Sciatic nerve (tissue), 2 donors: ENCODE measurements at regions of chr6 and their contacts with region 1.

Region 1: DNA sequence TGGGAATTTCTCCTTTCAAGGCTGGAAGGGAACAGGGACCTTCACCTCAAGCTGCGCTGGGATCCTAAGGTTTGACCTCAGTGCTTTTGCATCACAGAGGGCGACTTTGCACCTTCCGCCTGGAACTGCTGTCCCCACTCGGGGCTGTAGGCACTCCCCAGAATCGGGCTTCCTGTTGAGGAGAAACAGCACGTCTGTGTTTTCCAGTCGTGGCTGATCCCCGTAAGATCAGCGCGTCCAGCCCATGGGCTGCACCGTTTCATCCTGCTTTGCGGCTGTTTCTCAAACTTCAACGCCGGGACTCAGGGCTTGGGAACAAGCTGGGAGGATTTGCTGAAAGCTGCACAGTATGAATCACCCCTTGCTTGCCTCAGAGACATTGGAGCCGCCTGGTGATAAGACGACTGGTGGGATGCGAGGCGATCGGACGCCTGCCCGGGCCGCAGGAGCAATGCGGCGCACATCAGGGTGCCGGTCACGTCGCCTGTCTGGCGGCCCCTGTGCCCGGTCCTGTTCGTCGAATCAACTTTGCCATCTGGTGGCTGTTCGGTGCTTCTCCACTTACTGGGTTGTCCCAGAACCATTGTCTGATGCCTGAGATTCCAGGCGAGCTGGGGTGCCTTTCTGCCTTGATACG is 53.6 kb upstream of the FRMD1 start:
- DNase-seq: no peak
- ATAC-seq: peak; percentile 80

Region 2: DNA sequence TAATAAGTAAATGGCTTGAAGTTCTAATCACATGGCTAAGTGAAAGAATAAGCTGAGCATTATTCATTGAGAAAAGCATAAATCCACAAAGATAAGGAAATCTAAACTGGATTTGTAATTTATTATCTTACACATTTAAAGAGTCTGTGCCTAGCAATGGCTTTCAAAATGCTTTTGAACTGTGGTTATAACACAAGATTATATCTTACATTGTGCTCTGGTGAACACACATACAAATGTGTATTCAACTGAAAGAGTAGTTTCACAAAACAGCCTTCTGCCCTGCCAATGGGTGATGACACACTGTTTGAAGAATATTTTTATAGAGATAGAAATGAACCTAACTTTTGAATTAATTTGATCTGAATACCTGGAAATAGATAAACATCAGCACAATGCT is 222.6 kb before region 1 on chr6:
- intact Hi-C with region 1: loop called (anchors 5 kb)
- DNase-seq: no peak
- ATAC-seq: no peak

Region 3: GRCh38 chr6:168355716-168356449 is 223.2 kb after region 1 on chr6:
- intact Hi-C with region 1: no loop called
- DNase-seq: no peak
- ATAC-seq: peak; percentile 91

Region 4: DNA sequence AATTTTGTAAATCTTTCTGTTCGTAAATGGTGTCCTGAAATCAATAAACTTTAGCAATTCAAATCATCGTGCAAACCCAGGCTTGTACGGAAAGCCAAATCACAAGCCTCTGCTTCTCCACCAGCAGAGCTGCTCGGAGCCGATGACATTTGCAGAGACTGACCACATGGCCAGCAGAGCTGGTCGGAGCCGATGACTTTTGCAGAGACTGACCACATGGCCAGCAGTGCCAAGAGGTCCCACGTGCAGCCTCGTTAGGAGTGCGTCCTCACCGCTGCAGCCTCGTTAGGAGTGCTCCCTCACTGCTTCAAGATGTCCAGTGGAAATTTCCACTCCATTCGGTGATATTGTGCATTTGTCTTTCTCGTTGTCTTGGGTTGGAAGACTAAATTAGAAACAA is 336.9 kb after region 1 on chr6:
- intact Hi-C with region 1: no loop called
- DNase-seq: no peak
- ATAC-seq: peak; percentile 90

Region 5: GRCh38 chr6:168999392-168999791 is 866.7 kb after region 1 on chr6:
- intact Hi-C with region 1: no loop called
- DNase-seq: no peak
- ATAC-seq: no peak